ENCODE measurements at regions of chr1 and their contacts with region 1.

Region 1: DNA sequence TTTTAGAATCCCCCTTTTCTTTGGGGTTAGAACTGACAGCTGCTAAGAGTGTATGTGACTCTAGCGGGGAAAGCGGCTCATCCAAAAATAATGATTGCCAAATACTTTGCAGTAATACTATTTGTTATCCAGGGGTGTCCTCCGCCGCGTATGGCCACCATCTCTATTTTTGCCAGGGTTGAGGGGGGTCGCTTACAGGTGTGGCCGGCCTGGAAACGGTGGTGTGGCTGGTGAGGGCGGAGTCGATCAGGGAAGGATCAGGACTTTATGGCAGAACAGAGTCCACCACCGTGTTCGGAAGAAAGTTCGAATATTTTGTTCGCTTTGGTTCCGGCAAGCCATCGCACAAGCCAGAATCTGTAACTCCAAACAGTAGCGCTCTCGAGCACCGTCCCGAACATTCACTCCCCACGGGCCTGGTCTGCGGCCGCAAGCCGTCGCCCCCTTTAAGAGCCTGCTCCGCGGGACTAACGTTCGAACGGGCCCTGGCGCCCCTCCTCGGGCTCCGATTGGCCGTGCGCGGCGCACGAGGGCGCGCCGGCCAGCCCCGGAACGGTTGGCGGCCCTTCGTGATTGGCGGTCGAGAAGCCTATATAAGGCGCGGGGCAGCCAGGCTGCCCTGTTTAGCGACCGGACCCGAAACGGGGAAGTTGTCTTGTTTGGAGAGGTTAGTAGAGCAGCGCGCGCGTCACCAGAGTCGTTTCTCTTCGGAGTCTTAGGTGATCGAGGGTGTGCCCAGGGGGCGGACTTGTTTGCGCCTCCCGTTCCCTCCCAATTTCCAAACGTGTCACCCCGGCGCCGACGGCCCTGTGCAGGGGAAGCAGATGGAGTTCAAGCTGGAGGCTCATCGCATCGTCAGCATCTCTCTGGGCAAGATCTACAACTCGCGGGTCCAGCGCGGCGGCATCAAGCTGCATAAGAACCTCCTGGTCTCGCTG is at the start of gene IER5:
- DNase-seq: peak; percentile 97
- ATAC-seq: peak; percentile 73 to 79
- H3K4me3 ChIP-seq: peak within 1 kb of the TSS; percentile 79 to 94 (median 87)
- H3K27ac ChIP-seq: peak within 1 kb of the TSS; percentile 89 to 97 (median 96)
- H3K4me1 ChIP-seq: peaks cover 20 to 39% of the 10 kb centered on the region in 2 donors
- H3K27me3 ChIP-seq: no peaks in the 10 kb centered on the region
- CTCF ChIP-seq: peak in 1 of 5 experiments; percentile 12
- POLR2A ChIP-seq: peak; percentile 100
- total RNA-seq, gene IER5: 18.7 to 39.8 (median 26.1) TPM

Region 2: GRCh38 chr1:181021811-181022434 is 66.4 kb before region 1 on chr1:
- in situ Hi-C with region 1: no loop called
- intact Hi-C with region 1: loop called (anchors 5 kb)
- DNase-seq: peak; percentile 38 to 45
- ATAC-seq: peak; percentile 56 to 60
- H3K4me3 ChIP-seq: peak overlapping the region; percentile 68 to 99 (median 85)
- H3K27ac ChIP-seq: peak overlapping the region; percentile 88 to 98 (median 96)
- H3K4me1 ChIP-seq: peaks cover 13 to 20% of the 10 kb centered on the region in 2 donors
- H3K27me3 ChIP-seq: no peaks in the 10 kb centered on the region
- CTCF ChIP-seq: no peak
- POLR2A ChIP-seq: no peak

Region 3: GRCh38 chr1:181062836-181063428 is 25.4 kb before region 1 on chr1:
- in situ Hi-C with region 1: no loop called
- intact Hi-C with region 1: loop called (anchors 1 kb)
- DNase-seq: peak; percentile 42 to 66
- ATAC-seq: peak; percentile 65 to 73
- H3K4me3 ChIP-seq: peak overlapping the region; percentile 37 to 47 (median 42)
- H3K27ac ChIP-seq: peak overlapping the region; percentile 89 to 100 (median 94)
- H3K4me1 ChIP-seq: peaks cover 28 to 38% of the 10 kb centered on the region in 2 donors
- H3K27me3 ChIP-seq: no peaks in the 10 kb centered on the region
- CTCF ChIP-seq: no peak
- POLR2A ChIP-seq: peak in 1 of 2 donors; percentile 25

Region 4: DNA sequence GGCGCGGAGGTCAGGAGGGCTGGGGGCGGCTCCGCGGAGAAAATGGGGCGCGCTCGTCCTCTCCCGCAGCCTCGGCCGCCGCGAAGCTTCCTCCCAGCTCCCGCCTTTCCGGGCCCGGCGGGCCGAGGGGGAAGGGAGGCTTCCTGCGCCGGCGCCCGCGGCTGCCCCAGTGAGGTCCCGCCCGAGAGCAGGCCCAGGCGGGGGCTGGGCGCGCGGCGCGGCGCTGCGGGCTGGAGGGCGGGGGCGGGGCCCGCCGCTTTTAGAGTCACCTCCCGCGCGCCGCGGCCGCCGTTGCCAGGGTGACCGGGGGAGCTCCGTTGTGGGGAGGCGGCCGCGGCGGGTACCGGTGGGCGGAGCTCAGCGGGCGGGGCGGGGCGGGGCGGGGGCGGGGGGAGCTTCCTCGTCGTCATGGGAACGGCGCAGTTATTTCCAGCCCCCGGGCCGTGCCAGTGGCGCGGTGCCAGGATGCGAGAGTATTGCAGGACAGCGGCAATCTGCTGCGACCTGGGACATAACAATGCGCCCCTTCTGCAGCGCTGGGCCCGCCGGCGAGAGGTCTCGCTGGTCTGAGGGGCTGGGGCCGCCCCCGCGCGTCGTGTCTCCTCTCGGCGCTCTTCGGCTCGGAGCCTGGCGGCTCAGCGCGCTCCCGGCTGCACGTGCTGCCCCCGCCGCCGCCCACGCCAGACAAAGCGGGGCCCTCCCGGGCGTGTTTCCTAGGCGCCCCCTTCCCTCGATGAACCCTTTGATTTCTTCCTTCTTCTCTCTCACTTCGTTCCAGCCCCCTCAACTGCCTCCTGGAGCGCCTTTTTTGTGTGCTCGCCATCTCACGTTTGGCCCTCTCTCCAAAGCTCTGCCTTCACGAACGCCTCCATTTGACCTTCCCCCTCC is 17.0 kb after region 1 on chr1:
- in situ Hi-C with region 1: no loop called
- intact Hi-C with region 1: loop called (anchors 1 kb)
- DNase-seq: peak; percentile 92 to 95
- ATAC-seq: peak; percentile 79 to 84
- H3K4me3 ChIP-seq: peak overlapping the region; percentile 70 to 100 (median 79)
- H3K27ac ChIP-seq: peak overlapping the region; percentile 79 to 95 (median 88)
- H3K4me1 ChIP-seq: peaks cover 22 to 35% of the 10 kb centered on the region in 2 donors
- H3K27me3 ChIP-seq: no peaks in the 10 kb centered on the region
- CTCF ChIP-seq: no peak
- POLR2A ChIP-seq: peak; percentile 79 to 80

Region 5: DNA sequence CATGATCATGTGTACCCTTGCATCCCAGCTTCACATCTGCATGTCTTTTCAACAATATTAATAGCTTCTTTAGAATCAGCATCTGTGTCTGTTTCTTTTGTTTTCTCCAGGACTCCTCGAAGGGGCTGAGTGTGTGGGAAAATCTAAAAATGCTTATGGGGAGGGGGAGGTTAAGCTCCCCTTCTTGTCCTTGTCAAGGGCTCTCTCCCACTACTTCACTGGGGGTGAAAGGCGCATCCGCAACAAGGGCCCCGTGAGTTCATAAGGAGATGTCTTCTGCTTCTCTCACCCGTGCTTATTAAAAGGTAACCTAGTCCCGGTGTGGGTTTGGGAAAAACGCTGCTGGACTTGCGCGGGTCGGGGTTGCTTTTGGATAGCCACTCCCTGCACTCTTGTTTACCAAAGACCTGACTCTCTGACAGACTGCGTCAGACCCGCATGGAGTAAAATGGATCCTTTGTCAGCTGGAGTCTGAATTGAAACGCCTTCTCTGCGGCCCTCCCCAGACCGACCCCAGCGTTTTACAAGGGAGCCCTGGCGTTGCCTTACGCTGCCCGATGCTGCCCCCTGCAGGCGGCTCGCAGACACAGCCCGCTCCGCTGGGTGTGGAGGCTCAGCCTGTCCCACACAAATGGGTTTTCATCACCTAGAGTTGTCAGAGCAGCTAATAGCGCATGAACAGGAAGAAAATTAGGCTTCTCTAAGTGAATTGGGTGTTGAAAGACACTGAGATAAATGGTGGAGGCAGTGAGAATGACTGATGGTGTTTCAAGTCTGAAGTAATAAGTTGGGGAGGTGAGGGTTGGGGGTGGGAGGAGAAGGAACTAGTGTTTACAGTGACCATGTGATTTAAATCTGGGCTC is 54.0 kb after region 1 on chr1:
- in situ Hi-C with region 1: loop called (anchors 5 to 10 kb)
- intact Hi-C with region 1: loop called (anchors 1 kb)
- DNase-seq: peak; percentile 65 to 81
- ATAC-seq: peak; percentile 93 to 96
- H3K4me3 ChIP-seq: peak overlapping the region; percentile 37 to 47 (median 42)
- H3K27ac ChIP-seq: peak overlapping the region; percentile 27 to 64 (median 44)
- H3K4me1 ChIP-seq: peaks cover 4 to 18% of the 10 kb centered on the region in 2 donors
- H3K27me3 ChIP-seq: no peaks in the 10 kb centered on the region
- CTCF ChIP-seq: peak; percentile 96 to 99 (median 98)
- POLR2A ChIP-seq: no peak

Region 6: GRCh38 chr1:181166377-181167196 is 78.2 kb after region 1 on chr1:
- in situ Hi-C with region 1: no loop called
- intact Hi-C with region 1: loop called (anchors 5 kb)
- DNase-seq: peak; percentile 48 to 67
- ATAC-seq: peak; percentile 98 to 100
- H3K4me3 ChIP-seq: no peak overlapping the region
- H3K27ac ChIP-seq: peak overlapping the region; percentile 61 to 69 (median 64)
- H3K4me1 ChIP-seq: peaks cover 0 to 4% of the 10 kb centered on the region in 2 donors
- H3K27me3 ChIP-seq: no peaks in the 10 kb centered on the region
- CTCF ChIP-seq: peak; percentile 81 to 93 (median 87)
- POLR2A ChIP-seq: no peak

Region 7: GRCh38 chr1:181255270-181255929 is 167.1 kb after region 1 on chr1:
- in situ Hi-C with region 1: no loop called
- intact Hi-C with region 1: no loop called
- DNase-seq: peak in 1 of 2 donors; percentile 4
- ATAC-seq: peak in 1 of 2 donors; percentile 50
- H3K4me3 ChIP-seq: no peak overlapping the region
- H3K27ac ChIP-seq: no peak overlapping the region
- H3K4me1 ChIP-seq: peaks cover 0 to 10% of the 10 kb centered on the region in 2 donors
- H3K27me3 ChIP-seq: no peaks in the 10 kb centered on the region
- CTCF ChIP-seq: no peak
- POLR2A ChIP-seq: no peak

Region 8: GRCh38 chr1:181347495-181348390 is 259.4 kb after region 1 on chr1:
- in situ Hi-C with region 1: no loop called
- intact Hi-C with region 1: no loop called
- DNase-seq: no peak
- ATAC-seq: no peak
- H3K4me3 ChIP-seq: no peak overlapping the region
- H3K27ac ChIP-seq: no peak overlapping the region
- H3K4me1 ChIP-seq: no peaks in the 10 kb centered on the region
- H3K27me3 ChIP-seq: no peaks in the 10 kb centered on the region
- CTCF ChIP-seq: no peak
- POLR2A ChIP-seq: no peak

Measured in gastrocnemius medialis (tissue), 4 donors.